ENCODE measurements at regions of chr3 and their contacts with region 1.

Region 1: GRCh38 chr3:122021811-122022401 is at the start of gene ILDR1:
- DNase-seq: no peak
- ATAC-seq: peak; percentile 55
- H3K4me3 ChIP-seq: peak within 1 kb of the TSS; percentile 72
- H3K27ac ChIP-seq: peak within 1 kb of the TSS; percentile 65
- H3K4me1 ChIP-seq: peaks cover 49% of the 10 kb centered on the region
- H3K27me3 ChIP-seq: no peaks in the 10 kb centered on the region
- CTCF ChIP-seq: no peak
- EP300 ChIP-seq: no peak
- POLR2A ChIP-seq: peak; percentile 60; the same call in 1 of the 2 replicates
- RAD21 ChIP-seq: no peak
- polyA plus RNA-seq, gene ILDR1: 1.3 to 1.8 TPM

Region 2: GRCh38 chr3:122081543-122082247 is 59.8 kb after region 1 on chr3:
- CTCF ChIA-PET with region 1: interaction called, 11 read pairs
- POLR2A ChIA-PET with region 1: interaction called, 67 read pairs
- RAD21 ChIA-PET with region 1: interaction called, 180 read pairs
- SMC1A ChIA-PET with region 1: interaction called, 233 read pairs
- in situ Hi-C with region 1: no loop called
- intact Hi-C with region 1: no loop called
- DNase-seq: no peak
- ATAC-seq: peak; percentile 57
- H3K4me3 ChIP-seq: peak overlapping the region; percentile 86; the same call in 1 of the 2 replicates
- H3K27ac ChIP-seq: peak overlapping the region; percentile 97
- H3K4me1 ChIP-seq: peaks cover 62% of the 10 kb centered on the region
- H3K27me3 ChIP-seq: no peaks in the 10 kb centered on the region
- CTCF ChIP-seq: no peak
- EP300 ChIP-seq: peak; percentile 62 to 89; a peak in 3 of 4 replicates
- POLR2A ChIP-seq: no peak
- RAD21 ChIP-seq: 0 out of 2 replicates have a peak, but pooled peaks have one; percentile 12

Measured in GM12878 (cell line).